ENCODE measurements at regions of chr1 and their contacts with region 1.

Region 1: GRCh38 chr1:204363335-204364124 is 3.8 kb upstream of the PLEKHA6 start:
- DNase-seq: peak; percentile 81
- H3K27ac ChIP-seq: peak overlapping the region; percentile 48
- CTCF ChIP-seq: peak; percentile 93

Region 2: GRCh38 chr1:204198151-204198994 is 165.2 kb before region 1 on chr1:
- CTCF ChIA-PET with region 1: interaction called, 19 read pairs
- POLR2A ChIA-PET with region 1: no interaction called
- DNase-seq: peak; percentile 93
- H3K27ac ChIP-seq: no peak overlapping the region
- CTCF ChIP-seq: no peak

Region 3: GRCh38 chr1:204213668-204214662 is 149.6 kb before region 1 on chr1 and contains the start of gene GOLT1A:
- CTCF ChIA-PET with region 1: interaction called, 37 read pairs
- POLR2A ChIA-PET with region 1: no interaction called
- DNase-seq: peak; percentile 67
- H3K27ac ChIP-seq: no peak within 1 kb of the TSS
- CTCF ChIP-seq: peak; percentile 50

Region 4: GRCh38 chr1:204283781-204284645 is 79.5 kb before region 1 on chr1:
- CTCF ChIA-PET with region 1: interaction called, 15 read pairs
- POLR2A ChIA-PET with region 1: no interaction called
- DNase-seq: no peak
- H3K27ac ChIP-seq: no peak overlapping the region
- CTCF ChIP-seq: no peak

Region 5: GRCh38 chr1:204426029-204426436 is 62.5 kb after region 1 on chr1:
- CTCF ChIA-PET with region 1: no interaction called
- POLR2A ChIA-PET with region 1: no interaction called
- DNase-seq: peak; percentile 85
- H3K27ac ChIP-seq: peak overlapping the region; percentile 66
- CTCF ChIP-seq: no peak